ENCODE measurements at regions of chr5 and their contacts with region 1.

Region 1: DNA sequence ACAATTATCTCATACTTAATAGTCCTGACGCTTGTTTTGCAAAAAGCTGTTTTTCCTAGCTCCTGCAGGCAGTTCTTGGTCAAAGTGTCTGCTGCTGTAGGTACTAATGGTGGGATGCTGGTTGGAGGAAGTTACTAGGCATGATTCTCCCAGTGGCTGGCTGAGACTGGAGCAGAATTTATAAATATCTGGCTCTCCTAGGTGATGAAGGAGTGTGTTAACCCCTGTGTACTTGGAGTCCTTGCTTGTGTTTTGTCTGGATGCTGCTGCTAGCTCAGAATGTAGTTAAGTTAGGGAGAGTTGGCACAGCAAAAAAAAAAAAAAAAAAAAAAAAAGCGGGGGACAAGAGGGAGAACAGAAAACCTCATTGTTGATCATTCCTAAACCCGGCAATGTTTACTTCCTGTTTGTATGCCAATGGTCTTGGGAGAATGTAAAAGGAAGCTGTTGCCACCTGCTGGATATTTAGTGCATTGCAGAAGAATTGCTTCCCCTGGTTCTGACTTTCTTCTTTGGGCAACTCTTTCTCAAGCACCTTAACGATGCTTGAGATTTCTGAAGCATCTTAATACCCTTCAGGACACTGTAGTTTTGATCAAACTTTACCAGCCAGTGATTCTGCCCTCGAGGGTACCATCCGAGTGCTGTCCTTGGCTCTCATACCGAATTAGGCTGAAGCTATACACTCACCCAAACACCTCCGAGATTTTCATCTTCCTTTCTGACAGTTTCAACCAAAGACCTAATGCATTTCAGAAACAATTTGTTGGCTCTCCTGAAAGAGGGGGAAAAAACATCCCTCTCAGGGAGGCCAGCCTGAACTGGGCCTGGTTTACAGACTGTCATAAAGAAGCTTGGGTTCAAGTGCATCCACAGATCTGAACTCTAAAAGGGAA is 71.7 kb upstream of the WWC1 start:
- DNase-seq: peak; percentile 76
- CTCF ChIP-seq: peak; percentile 89

Region 2: DNA sequence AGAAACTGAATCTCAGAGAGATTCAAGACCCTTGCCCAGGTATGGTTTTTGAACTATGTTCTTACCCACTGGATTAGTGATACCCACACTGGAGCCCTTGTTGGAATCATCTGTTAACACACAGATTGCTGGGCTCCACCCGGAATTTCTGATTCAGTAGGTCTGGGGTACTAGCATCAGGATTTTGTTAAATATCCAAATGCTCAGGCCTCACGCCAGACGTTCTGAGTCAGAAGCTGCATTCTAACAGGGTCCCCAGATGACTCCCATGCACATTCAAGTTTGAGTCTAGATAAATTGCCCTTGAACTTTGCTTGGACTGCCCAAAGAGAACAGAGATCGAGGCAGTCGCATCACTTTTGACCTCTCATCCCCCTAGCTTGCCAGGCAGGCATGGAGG is 110.3 kb before region 1 on chr5:
- CTCF ChIA-PET with region 1: interaction called, 106 read pairs
- POLR2A ChIA-PET with region 1: no interaction called
- DNase-seq: no peak
- CTCF ChIP-seq: no peak

Region 3: DNA sequence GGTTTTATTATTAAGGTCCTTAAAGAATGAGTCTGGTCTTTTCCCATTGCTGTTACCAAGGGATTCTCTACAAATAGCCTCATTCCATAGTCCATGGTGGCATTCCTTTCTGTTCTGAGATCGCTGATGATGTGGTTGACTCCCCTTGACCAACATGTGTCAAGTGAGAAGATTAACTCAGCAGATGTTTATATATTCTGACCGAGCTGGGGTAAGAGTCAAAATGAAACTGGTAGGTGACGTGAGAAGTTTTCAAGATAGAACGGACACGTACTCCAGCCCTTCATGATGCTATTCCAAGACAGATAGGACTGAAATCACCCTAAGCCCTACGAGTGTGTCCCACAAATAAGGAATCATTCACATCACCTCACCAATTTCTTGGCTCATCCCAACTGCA is 83.9 kb before region 1 on chr5:
- CTCF ChIA-PET with region 1: interaction called, 13 read pairs
- POLR2A ChIA-PET with region 1: no interaction called
- DNase-seq: peak; percentile 54
- CTCF ChIP-seq: no peak

Region 4: GRCh38 chr5:168198359-168198758 is 21.4 kb before region 1 on chr5:
- CTCF ChIA-PET with region 1: interaction called, 24 read pairs
- POLR2A ChIA-PET with region 1: interaction called, 6 read pairs
- DNase-seq: no peak
- CTCF ChIP-seq: no peak

Region 5: GRCh38 chr5:168244838-168245559 is 25.2 kb after region 1 on chr5:
- CTCF ChIA-PET with region 1: interaction called, 16 read pairs
- POLR2A ChIA-PET with region 1: interaction called, 3 read pairs
- DNase-seq: no peak
- CTCF ChIP-seq: no peak

Measured in GM10248 (cell line).